OCI-LY7 (cell line): ENCODE measurements at regions of chr2 and their contacts with region 1.

Region 1: DNA sequence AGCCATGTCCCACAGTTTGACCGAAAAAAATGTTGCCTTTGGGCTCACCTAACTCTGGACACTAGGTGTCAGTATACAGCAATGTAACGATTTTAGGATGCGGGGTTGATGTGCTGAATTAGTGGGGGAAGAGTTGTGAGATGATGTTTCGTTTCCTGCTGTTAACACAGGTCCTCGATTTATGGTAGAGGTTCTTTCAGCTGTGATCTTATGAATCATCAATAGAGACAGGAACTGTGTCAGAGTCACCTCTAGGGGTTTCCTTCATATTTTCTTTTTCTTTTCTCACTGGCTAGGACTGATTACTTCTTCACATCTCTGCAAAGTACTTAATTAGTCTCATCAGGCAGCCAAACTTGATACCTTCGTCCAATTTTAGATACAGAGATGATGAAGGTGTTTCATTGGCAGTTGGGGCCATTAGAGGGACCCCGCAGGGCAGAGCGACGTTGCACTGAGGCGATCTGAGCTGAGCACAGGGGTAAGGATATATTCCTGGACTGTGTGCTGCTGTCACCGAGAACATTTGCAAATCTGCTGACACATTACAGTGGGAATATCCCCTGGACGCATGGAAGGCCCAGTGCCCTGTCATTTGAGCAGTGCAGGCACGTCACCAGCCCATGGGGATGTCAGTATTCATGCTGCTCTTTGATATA is 10.2 kb upstream of the MMADHC start:
- DNase-seq: peak; percentile 76
- H3K4me3 ChIP-seq: no peak overlapping the region
- H3K27ac ChIP-seq: no peak overlapping the region
- H3K4me1 ChIP-seq: peaks cover 4% of the 10 kb centered on the region
- CTCF ChIP-seq: peak; percentile 88

Region 2: DNA sequence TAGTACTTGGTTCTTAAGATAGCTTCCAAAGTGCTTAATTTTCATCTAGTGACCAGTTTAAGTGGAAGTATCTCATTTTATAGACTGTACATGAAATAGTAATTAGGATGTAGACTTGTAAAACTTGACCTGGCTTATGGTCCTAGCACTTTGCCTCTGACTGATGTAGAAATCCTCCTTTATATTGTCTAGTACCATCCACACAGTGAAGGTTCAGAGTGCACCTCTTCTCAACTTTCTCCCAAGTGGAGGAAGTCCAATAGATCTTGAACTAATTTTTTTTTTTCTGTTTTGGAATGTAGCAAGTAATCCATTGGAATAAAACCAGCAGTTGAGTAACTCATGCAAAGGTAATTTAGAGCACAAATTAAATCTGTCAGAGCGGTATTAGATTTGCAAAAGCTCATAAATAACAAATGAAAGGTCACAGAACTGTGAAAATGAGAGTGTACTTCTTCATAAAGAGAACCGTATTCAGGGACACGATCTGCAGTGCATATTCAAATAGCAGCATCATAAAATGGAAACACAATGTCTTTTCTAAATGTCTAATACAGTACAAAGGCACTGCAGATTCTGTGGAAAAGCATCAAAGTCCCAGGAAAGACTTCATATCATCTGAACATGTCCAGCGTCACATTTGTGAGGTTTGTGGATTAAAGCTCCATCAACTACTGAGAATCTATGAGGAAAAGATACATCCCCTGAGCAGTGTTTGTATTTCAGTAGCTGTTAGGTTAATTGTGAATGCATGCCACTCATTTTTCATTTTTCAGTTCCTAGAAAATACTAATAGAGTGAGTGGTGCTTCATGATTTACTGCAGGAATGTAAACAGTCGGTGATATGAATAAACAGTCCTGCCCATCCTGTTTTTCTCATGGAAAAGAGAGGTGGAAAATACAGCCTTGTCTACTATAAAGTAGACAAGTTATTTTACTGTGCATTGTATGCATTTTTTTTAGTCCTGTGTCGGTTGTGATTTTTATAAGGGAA is 166.8 kb before region 1 on chr2:
- CTCF ChIA-PET with region 1: no interaction called
- POLR2A ChIA-PET with region 1: no interaction called
- intact Hi-C with region 1: no loop called
- DNase-seq: no peak
- H3K4me3 ChIP-seq: no peak overlapping the region
- H3K27ac ChIP-seq: no peak overlapping the region
- H3K4me1 ChIP-seq: no peaks in the 10 kb centered on the region
- CTCF ChIP-seq: no peak

Region 3: DNA sequence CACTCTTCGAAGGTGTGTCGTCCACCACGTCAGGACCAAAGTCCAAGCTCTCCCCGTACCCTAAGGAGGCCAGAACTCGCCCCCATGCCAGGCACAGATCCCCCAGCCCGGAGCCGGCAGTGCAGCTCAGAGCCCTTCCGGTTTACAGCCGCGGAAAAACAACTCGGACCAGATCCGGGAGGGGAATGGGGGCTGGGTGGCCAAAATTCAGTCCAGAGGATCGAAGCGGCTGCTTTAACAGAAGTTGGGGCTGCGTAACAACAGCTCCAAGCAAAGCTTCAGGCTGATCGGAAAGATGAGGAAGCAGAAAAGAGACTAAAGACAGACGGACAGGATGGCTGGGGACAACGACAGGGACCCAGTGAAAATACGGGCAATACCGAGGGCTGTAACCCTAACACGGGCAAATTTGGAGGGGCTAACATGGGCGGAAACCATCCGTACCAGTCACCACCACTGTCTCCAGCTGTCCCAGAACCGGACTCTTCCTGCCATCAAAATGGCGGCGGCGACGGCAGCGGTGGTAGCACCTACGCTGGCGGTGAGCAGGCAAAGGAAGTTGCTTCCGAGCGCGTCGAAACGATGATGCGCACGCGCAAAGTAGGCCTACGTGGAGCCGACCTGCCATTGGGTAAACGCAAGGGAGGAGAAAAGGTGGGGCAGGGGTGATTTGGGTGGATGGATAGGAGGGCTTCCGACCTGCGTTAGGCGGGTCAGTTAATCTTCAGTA is 10.4 kb before region 1 on chr2 and contains the start of gene MMADHC:
- CTCF ChIA-PET with region 1: interaction called, 3 read pairs
- POLR2A ChIA-PET with region 1: interaction called, 10 read pairs
- intact Hi-C with region 1: no loop called
- DNase-seq: peak; percentile 97
- H3K4me3 ChIP-seq: peak within 1 kb of the TSS; percentile 94
- H3K27ac ChIP-seq: peak within 1 kb of the TSS; percentile 88
- H3K4me1 ChIP-seq: peaks cover 20% of the 10 kb centered on the region
- CTCF ChIP-seq: no peak
- total RNA-seq, gene MMADHC: 68.5 and 73.6 TPM in 2 replicates

Region 4: GRCh38 chr2:150487537-150488429 is 890.0 kb after region 1 on chr2 and contains the start of gene RND3:
- CTCF ChIA-PET with region 1: no interaction called
- POLR2A ChIA-PET with region 1: no interaction called
- intact Hi-C with region 1: loop called (anchors 10 kb)
- DNase-seq: peak; percentile 3
- H3K4me3 ChIP-seq: no peak within 1 kb of the TSS
- H3K27ac ChIP-seq: no peak within 1 kb of the TSS
- H3K4me1 ChIP-seq: no peaks in the 10 kb centered on the region
- CTCF ChIP-seq: peak; percentile 64
- total RNA-seq, gene RND3: not detected in 2 replicates

Region 5: GRCh38 chr2:150609831-150610582 is 1012.2 kb after region 1 on chr2:
- CTCF ChIA-PET with region 1: no interaction called
- POLR2A ChIA-PET with region 1: no interaction called
- intact Hi-C with region 1: loop called (anchors 5 kb)
- DNase-seq: no peak
- H3K4me3 ChIP-seq: no peak overlapping the region
- H3K27ac ChIP-seq: no peak overlapping the region
- H3K4me1 ChIP-seq: no peaks in the 10 kb centered on the region
- CTCF ChIP-seq: no peak

Region 6: DNA sequence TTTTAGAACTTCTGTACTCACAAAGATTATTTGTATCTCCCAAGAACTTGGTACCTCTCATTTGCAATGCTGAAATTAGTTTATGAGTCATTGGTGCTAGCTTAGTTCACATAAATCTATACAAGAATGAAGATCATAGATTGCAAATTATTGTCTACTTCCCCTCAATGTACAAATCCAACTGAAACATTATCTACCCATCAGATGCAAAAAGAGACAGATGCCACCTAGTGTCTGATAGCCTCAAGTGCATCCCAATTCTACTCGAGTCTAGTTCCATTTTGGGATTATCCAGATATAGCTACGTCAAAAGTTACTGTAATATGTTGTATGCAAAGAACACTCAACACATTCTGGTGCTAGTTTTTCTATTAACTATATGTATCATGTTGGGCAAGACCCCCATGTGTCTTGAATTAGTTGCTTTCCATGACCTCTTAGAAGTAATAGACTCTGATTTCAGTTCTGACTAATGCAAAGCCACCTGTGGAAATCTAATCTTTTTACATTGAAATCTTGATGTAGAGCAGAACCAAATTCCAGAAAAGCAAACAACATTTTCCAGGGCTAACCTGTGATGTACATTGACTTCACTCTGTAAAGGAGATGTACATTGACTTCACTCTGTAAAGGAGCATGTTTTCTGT is 1453.9 kb after region 1 on chr2:
- CTCF ChIA-PET with region 1: no interaction called
- POLR2A ChIA-PET with region 1: no interaction called
- intact Hi-C with region 1: loop called (anchors 2 kb)
- DNase-seq: peak; percentile 37
- H3K4me3 ChIP-seq: no peak overlapping the region
- H3K27ac ChIP-seq: no peak overlapping the region
- H3K4me1 ChIP-seq: no peaks in the 10 kb centered on the region
- CTCF ChIP-seq: peak; percentile 91

Region 7: GRCh38 chr2:151238527-151239487 is 1641.0 kb after region 1 on chr2:
- CTCF ChIA-PET with region 1: no interaction called
- POLR2A ChIA-PET with region 1: no interaction called
- intact Hi-C with region 1: loop called (anchors 2 kb)
- DNase-seq: peak; percentile 56
- H3K4me3 ChIP-seq: no peak overlapping the region
- H3K27ac ChIP-seq: no peak overlapping the region
- H3K4me1 ChIP-seq: no peaks in the 10 kb centered on the region
- CTCF ChIP-seq: peak; percentile 89